ENCODE measurements at regions of chr7 and their contacts with region 1.

Region 1: GRCh38 chr7:92489634-92490033 is 11.9 kb upstream of the ERVW-1 start:
- DNase-seq: no peak
- ATAC-seq: no peak
- H3K4me3 ChIP-seq: no peak overlapping the region
- H3K27ac ChIP-seq: no peak overlapping the region
- H3K4me1 ChIP-seq: no peaks in the 10 kb centered on the region; a peak in 1 of 5 replicates
- H3K27me3 ChIP-seq: no peaks in the 10 kb centered on the region
- CTCF ChIP-seq: no peak
- EP300 ChIP-seq: no peak
- POLR2A ChIP-seq: no peak
- RAD21 ChIP-seq: no peak

Region 2: GRCh38 chr7:92306153-92306552 is 183.5 kb before region 1 on chr7:
- CTCF ChIA-PET with region 1: no interaction called
- POLR2A ChIA-PET with region 1: no interaction called
- in situ Hi-C with region 1: no loop called
- intact Hi-C with region 1: no loop called
- DNase-seq: no peak
- ATAC-seq: no peak
- H3K4me3 ChIP-seq: no peak overlapping the region
- H3K27ac ChIP-seq: no peak overlapping the region
- H3K4me1 ChIP-seq: no peaks in the 10 kb centered on the region
- H3K27me3 ChIP-seq: no peaks in the 10 kb centered on the region
- CTCF ChIP-seq: no peak
- EP300 ChIP-seq: no peak
- POLR2A ChIP-seq: no peak
- RAD21 ChIP-seq: no peak

Region 3: GRCh38 chr7:92547579-92547978 is 57.9 kb after region 1 on chr7:
- CTCF ChIA-PET with region 1: no interaction called
- POLR2A ChIA-PET with region 1: no interaction called
- in situ Hi-C with region 1: no loop called
- intact Hi-C with region 1: loop called (anchors 5 kb)
- DNase-seq: no peak
- ATAC-seq: no peak; the same call in 2 of the 3 replicates
- H3K4me3 ChIP-seq: no peak overlapping the region
- H3K27ac ChIP-seq: no peak overlapping the region
- H3K4me1 ChIP-seq: peaks cover 0 to 6% of the 10 kb centered on the region in 2 experiments; a peak in 1 of 5 replicates
- H3K27me3 ChIP-seq: peaks cover 0 to 16% of the 10 kb centered on the region in 2 experiments; a peak in 3 of 5 replicates
- CTCF ChIP-seq: no peak
- EP300 ChIP-seq: no peak
- POLR2A ChIP-seq: no peak
- RAD21 ChIP-seq: no peak

Region 4: DNA sequence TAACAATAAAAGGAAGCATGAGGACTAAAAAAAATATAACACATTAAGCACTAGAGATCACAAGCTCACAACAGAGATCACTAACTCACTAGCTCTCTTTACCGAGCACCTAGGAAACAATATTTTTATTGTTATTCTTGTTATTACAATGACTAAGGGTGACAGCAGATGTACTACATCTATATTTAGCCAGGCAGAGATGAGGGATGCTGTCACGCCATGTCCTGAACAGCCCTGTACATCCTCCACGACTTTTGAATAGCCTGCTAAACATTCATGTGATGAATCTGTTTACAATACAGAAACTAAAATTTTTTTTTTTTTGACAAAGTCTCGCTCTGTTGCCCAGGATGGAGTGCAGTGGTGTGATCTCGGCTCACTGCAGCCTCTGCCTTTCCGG is 77.8 kb after region 1 on chr7:
- CTCF ChIA-PET with region 1: no interaction called
- POLR2A ChIA-PET with region 1: no interaction called
- in situ Hi-C with region 1: no loop called
- intact Hi-C with region 1: loop called (anchors 10 kb)
- DNase-seq: no peak
- ATAC-seq: no peak
- H3K4me3 ChIP-seq: no peak overlapping the region
- H3K27ac ChIP-seq: no peak overlapping the region
- H3K4me1 ChIP-seq: no peaks in the 10 kb centered on the region
- H3K27me3 ChIP-seq: no peaks in the 10 kb centered on the region
- CTCF ChIP-seq: no peak
- EP300 ChIP-seq: no peak
- POLR2A ChIP-seq: 0 out of 2 replicates have a peak, but pooled peaks have one; percentile 7
- RAD21 ChIP-seq: no peak